ENCODE measurements at regions of chr10 and their contacts with region 1.

Region 1: DNA sequence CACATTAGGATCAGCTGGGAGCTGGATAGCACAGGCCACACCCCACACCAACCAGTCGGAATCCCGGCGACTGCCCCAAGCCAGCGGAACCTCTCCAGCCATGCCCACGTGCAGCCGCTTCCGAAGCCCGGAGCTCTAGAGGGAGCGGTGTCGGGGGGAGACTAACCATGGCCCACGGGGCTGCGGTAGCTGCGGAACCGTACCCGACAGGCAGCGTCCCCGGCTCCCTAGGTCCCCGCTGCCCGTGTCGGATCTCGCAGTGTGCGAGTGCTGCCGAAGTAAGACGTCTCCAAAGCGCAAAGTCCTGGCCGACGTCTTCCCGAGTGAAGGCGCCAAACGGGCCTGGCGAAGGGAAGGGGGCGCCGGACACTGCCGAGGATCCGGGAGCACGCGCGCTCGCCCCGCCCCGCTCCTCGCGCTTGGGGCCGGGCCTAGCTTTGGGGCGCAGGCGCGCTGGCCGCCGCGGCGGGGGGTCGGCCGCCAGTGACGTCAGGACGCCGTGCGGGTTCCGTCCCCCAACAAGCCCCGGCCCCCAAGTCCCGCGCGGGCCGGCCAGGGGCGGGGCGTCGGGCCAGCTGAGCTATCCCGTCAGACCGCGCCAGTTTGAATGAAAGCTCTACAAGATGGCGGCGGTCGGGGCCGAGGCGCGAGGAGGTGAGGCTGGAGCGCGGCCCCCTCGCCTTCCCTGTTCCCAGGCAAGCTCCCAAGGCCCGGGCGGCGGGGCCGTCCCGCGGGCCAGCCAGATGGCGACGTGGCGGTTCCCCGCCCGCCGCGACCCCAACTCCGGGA is at the start of gene SUV39H2:
- DNase-seq: peak; percentile 94
- H3K4me3 Mint-ChIP-seq: peak within 1 kb of the TSS; percentile 96
- H3K27ac Mint-ChIP-seq: peak within 1 kb of the TSS; percentile 92
- H3K4me1 Mint-ChIP-seq: peaks cover 53% of the 10 kb centered on the region
- H3K27me3 Mint-ChIP-seq: no peaks in the 10 kb centered on the region
- total RNA-seq, gene SUV39H2: 30.9 to 36.6 TPM

Region 2: GRCh38 chr10:14904316-14904732 is 25.9 kb after region 1 on chr10:
- CTCF ChIA-PET with region 1: interaction called, 10 read pairs
- POLR2A ChIA-PET with region 1: no interaction called
- DNase-seq: peak; percentile 49
- H3K4me3 Mint-ChIP-seq: no peak overlapping the region
- H3K27ac Mint-ChIP-seq: no peak overlapping the region
- H3K4me1 Mint-ChIP-seq: peaks cover 28% of the 10 kb centered on the region
- H3K27me3 Mint-ChIP-seq: no peaks in the 10 kb centered on the region